Activated T-helper 2 cell treated with anti-CD3 and anti-CD28 coated beads, Interferon-gamma antibody, Interleukin-2, Interleukin-4, amounts not matched to agents 10 μg/mL and 5 μg/mL and 100 μg/mL, durations not matched to agents 14 hours and 24 hours and 36 hours (primary cell): ENCODE measurements at regions of chr10 and their contacts with region 1.

Region 1: GRCh38 chr10:79445141-79445976 is at the start of gene ZCCHC24:
- DNase-seq: peak; percentile 94
- H3K4me3 Mint-ChIP-seq: peak within 1 kb of the TSS; percentile 82
- H3K27ac Mint-ChIP-seq: peak within 1 kb of the TSS; percentile 21
- H3K4me1 Mint-ChIP-seq: peaks cover 21% of the 10 kb centered on the region
- H3K27me3 Mint-ChIP-seq: peaks cover 34% of the 10 kb centered on the region
- total RNA-seq, gene ZCCHC24: 2.1 and 2.6 TPM in 2 replicates

Region 2: GRCh38 chr10:79248341-79249185 is 196.8 kb before region 1 on chr10:
- intact Hi-C with region 1: loop called (anchors 1 kb)
- DNase-seq: no peak
- H3K4me3 Mint-ChIP-seq: peak overlapping the region; percentile 78
- H3K27ac Mint-ChIP-seq: peak overlapping the region; percentile 92
- H3K4me1 Mint-ChIP-seq: peaks cover 67% of the 10 kb centered on the region
- H3K27me3 Mint-ChIP-seq: no peaks in the 10 kb centered on the region

Region 3: GRCh38 chr10:79434821-79435251 is 10.5 kb before region 1 on chr10:
- intact Hi-C with region 1: loop called (anchors 1 kb)
- DNase-seq: no peak
- H3K4me3 Mint-ChIP-seq: peak overlapping the region; percentile 15
- H3K27ac Mint-ChIP-seq: peak overlapping the region; percentile 78
- H3K4me1 Mint-ChIP-seq: peaks cover 16% of the 10 kb centered on the region
- H3K27me3 Mint-ChIP-seq: peaks cover 16% of the 10 kb centered on the region